Ascending aorta (tissue), 2 donors: ENCODE measurements at regions of chr15 and their contacts with region 1.

Region 1: GRCh38 chr15:57340682-57341259 is 35.5 kb upstream of the CGNL1 start:
- DNase-seq: no peak
- H3K4me3 ChIP-seq: no peak overlapping the region
- H3K27ac ChIP-seq: no peak overlapping the region
- H3K4me1 ChIP-seq: no peaks in the 10 kb centered on the region
- H3K27me3 ChIP-seq: no peaks in the 10 kb centered on the region
- CTCF ChIP-seq: peak; percentile 78 to 91 (median 82)

Region 2: DNA sequence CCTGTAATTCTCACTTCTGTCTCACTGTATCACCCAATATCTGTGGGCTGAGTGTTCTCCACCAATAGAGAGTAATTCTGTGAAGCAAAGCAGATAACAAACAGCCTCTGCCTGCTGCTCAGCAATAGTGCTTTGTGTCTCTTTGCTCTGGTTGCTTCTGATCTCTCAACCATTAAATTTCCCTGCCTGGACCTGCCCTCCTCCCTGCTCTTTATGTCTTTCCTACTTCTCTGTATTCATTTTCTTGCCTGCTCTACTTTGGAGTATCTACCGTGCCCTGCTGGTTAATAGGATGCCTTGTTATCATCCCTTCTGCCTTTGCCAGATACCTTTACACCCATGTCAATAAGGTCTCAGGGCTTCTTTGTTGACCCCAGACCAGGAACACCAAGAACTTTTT is 67.4 kb before region 1 on chr15:
- intact Hi-C with region 1: no loop called
- DNase-seq: no peak
- H3K4me3 ChIP-seq: no peak overlapping the region
- H3K27ac ChIP-seq: no peak overlapping the region
- H3K4me1 ChIP-seq: no peaks in the 10 kb centered on the region
- H3K27me3 ChIP-seq: no peaks in the 10 kb centered on the region
- CTCF ChIP-seq: no peak

Region 3: DNA sequence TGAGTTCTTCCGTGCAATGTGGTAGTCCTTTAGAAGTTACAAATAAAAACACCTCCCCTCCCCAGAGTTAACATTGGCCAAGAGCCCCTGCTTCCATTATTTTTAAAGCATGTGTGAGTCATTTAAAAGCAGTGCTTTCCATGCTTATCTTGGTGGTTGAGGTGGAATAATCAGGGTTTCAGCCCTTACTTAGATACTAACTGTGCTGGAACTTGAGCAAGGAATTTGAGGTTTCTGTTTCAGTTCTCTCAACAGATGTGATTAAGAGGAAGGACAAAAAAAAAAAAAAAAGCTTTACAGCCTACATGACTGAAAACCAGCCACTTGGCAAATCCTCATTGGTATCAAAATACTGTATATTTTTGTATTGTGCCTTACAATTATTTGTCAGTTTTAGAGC is 100.0 kb after region 1 on chr15:
- intact Hi-C with region 1: no loop called
- DNase-seq: no peak
- H3K4me3 ChIP-seq: no peak overlapping the region
- H3K27ac ChIP-seq: peak overlapping the region; percentile 28 to 41
- H3K4me1 ChIP-seq: peaks cover 0 to 13% of the 10 kb centered on the region in 2 donors
- H3K27me3 ChIP-seq: no peaks in the 10 kb centered on the region
- CTCF ChIP-seq: no peak

Region 4: DNA sequence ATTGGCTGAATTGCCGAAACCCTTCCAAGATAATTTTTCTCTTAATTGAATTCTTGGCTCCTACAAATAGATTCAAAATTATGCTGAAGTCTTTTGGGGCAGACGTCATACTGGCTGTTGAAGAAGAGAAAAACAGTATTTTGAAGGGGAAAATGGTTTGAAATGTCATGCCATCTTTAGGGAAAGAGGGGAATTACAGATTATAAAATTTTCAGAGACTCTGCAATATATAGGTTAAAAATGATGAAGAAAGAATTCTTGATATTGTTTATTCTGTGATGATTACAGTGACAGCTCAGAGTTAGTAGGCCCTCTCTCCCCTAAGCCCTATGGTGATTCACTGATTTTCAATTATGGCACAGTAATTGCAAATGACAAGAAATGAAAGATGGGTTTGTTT is 121.6 kb after region 1 on chr15:
- intact Hi-C with region 1: loop called (anchors 1 kb)
- DNase-seq: no peak
- H3K4me3 ChIP-seq: no peak overlapping the region
- H3K27ac ChIP-seq: no peak overlapping the region
- H3K4me1 ChIP-seq: no peaks in the 10 kb centered on the region
- H3K27me3 ChIP-seq: no peaks in the 10 kb centered on the region
- CTCF ChIP-seq: peak in 2 of 3 experiments; percentile 22 to 31

Region 5: DNA sequence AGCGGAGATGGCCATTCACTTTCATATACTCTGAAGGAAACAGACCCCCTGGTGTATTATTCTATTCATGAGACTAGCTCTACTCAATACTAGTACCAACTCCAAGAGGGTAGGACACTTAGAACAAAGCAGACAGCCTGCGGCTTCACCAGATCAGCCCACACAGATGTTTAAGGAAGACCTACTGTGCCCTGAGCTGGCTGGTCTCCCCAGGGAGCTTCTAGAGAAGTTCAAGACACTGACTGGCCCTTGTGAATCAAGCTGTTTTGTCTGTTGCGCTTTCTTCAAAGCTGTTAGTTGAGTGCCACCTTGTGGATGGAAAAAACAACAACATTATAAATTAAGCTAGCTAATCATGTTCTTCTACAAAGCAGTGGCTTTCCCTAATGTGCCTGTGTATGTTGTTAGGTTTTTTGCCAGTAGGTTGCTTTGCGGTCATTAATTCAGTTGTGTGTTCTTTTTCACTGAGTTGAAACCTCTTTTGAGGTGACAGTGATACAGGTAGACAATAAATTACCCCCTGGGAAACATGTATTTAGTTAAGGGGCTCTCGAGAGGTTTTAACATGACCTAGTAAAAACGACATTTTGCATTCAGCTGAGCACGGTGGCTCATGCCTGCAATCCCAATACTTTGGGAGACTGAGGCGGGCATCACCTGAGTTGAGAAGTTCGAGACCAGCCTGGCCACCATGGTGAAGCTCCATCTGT is 186.8 kb after region 1 on chr15:
- intact Hi-C with region 1: loop called (anchors 1 kb)
- DNase-seq: no peak
- H3K4me3 ChIP-seq: no peak overlapping the region
- H3K27ac ChIP-seq: no peak overlapping the region
- H3K4me1 ChIP-seq: no peaks in the 10 kb centered on the region
- H3K27me3 ChIP-seq: no peaks in the 10 kb centered on the region
- CTCF ChIP-seq: peak; percentile 56 to 76 (median 68)

Region 6: DNA sequence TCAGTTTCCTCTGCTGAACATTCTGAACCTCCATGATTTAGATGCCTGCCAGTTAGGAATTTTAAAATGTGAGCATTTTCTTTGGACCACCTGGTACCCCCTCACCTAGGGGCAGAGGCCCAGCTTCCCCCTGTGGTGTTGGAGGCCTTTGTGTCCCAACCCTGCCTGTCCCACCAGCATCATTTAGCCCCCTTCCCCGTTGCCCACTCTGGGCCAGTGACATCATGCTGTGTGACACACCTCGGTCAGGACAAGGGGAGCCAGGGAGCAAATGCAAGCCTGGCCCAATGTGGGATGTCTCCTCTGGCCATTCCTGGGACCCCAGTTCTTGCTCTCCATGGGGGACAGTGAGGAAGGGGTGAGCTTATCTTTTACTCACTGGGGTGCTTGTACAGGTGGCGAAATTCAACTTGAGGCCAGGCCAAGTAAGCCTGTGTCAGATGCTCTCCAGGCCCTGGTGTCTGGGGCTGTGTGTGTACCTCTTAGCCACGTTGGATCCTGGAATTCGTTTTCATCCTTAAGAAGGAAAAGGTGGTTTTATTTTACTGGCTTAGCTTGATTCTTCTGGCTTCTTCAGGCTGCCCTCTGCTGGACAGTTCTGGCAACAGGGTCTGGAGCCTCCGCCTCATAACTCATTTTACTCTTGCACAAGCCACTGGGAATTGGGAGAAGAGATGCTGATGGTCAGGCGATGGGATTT is 201.2 kb after region 1 on chr15:
- intact Hi-C with region 1: loop called (anchors 1 kb)
- DNase-seq: peak in 1 of 2 donors; percentile 84
- H3K4me3 ChIP-seq: no peak overlapping the region
- H3K27ac ChIP-seq: no peak overlapping the region
- H3K4me1 ChIP-seq: peaks cover 4 to 10% of the 10 kb centered on the region in 2 donors
- H3K27me3 ChIP-seq: no peaks in the 10 kb centered on the region
- CTCF ChIP-seq: peak; percentile 48 to 86 (median 65)